ENCODE measurements at regions of chr20 and their contacts with region 1.

Region 1: DNA sequence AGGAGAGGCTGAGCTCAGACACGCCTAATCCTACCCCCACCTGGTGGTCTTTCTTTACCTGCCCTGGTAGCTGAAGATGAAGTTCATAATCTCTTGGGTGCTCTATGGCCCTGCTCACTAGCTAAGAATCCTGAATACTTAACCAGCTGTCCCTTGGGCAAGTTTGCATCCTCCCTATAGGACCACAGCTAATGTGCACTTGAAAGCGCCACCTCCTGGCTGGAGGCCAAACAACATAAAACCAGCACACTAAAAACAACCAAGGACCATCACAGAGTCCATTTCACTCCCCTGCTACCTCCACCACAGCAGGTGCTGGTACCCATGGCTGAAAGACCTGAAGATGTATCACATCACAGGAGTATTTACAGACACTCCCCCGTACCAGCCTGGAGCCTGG is 155.5 kb upstream of the SLC24A3 start:
- DNase-seq: peak in 2 of 14 experiments; percentile 7 to 12
- ATAC-seq: no peak
- H3K4me3 ChIP-seq: no peak overlapping the region
- H3K4me3 Mint-ChIP-seq: no peak overlapping the region
- H3K27ac ChIP-seq: no peak overlapping the region
- H3K27ac Mint-ChIP-seq: no peak overlapping the region
- H3K4me1 ChIP-seq: no peaks in the 10 kb centered on the region
- H3K4me1 Mint-ChIP-seq: no peaks in the 10 kb centered on the region
- H3K27me3 ChIP-seq: peaks cover 0 to 3% of the 10 kb centered on the region in 2 experiments
- H3K27me3 Mint-ChIP-seq: peaks cover 10% of the 10 kb centered on the region
- CTCF ChIP-seq: no peak

Region 2: DNA sequence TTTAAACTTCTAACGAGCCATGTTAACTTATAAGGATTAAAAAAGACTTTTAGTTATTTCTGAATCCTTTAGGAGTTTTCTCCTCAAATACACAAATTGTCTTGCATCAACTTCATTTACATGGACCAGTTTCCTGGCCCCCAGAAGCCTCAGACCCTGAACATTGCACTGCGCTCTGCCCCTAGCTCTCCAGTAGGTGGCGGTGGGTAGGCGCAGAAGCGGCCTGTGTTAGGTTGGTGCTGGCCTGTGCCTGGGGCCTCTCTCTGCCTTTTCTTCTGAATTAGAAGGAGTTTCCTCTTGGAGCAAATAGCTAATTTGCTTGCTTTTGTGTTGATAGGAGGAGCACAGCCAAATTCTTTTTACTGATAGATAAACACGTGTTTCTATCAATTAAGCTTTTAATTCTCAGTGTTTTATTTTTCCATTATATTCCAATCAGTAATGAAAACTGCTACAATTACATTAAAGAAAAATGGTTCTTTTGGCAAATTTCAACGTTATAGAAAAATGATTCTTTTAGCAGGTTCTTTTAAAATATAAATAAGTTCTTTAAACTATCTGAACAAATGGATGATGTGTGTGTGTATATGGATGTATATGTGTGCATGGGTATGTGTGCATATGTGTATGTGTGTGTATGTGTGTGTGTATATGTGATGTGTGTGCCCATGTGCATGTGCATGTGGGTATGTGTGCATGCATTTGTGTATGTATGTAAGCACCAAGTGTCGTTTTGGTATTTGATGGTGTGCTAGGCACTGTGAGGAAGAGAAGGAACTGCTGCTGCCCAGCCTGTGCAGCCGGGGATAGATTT is 424.5 kb before region 1 on chr20:
- CTCF ChIA-PET with region 1: no interaction called
- POLR2A ChIA-PET with region 1: no interaction called
- intact Hi-C with region 1: loop called in 1 of 2 experiments (anchors 10 kb)
- DNase-seq: peak; percentile 6 to 57 (median 36)
- ATAC-seq: peak; percentile 62
- H3K4me3 ChIP-seq: no peak overlapping the region
- H3K4me3 Mint-ChIP-seq: no peak overlapping the region
- H3K27ac ChIP-seq: no peak overlapping the region
- H3K27ac Mint-ChIP-seq: no peak overlapping the region
- H3K4me1 ChIP-seq: no peaks in the 10 kb centered on the region
- H3K4me1 Mint-ChIP-seq: no peaks in the 10 kb centered on the region
- H3K27me3 ChIP-seq: no peaks in the 10 kb centered on the region
- H3K27me3 Mint-ChIP-seq: no peaks in the 10 kb centered on the region
- CTCF ChIP-seq: peak; percentile 74

Region 3: DNA sequence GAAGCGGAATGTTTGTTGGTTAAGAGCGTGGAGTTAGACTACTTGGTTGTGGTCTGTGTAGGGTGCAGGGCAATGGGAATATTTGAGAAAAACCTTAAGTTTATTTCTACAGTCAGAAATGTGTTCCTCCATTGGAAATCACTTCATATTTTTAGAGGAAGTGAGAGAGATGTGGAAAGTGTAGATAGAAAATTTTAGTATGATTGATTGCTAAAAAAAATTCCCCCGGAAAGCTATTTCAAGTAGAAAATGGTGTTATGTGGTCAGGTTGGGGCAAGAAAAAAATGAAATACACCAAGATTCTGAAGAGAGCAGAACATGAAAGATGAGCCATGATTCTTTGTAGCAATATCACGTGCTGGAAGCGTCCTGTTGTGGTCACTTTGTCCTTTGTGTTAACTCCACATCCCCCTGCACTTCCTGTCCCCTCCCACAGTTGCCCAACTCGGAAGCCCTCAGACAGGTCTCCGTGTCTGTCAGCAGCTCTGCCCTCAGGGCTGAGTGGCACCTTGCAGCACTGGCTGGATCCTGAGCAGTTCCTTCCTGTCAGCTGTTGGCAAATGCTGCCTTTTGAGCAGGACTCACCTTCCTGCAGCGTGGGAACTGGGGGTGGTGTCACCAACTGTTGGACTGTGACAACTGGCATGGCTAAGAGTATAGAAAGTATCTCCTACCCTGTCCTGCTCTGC is 18.1 kb after region 1 on chr20:
- CTCF ChIA-PET with region 1: no interaction called
- POLR2A ChIA-PET with region 1: no interaction called
- intact Hi-C with region 1: no loop called
- DNase-seq: peak in 4 of 14 experiments; percentile 2 to 36 (median 20)
- ATAC-seq: no peak
- H3K4me3 ChIP-seq: no peak overlapping the region
- H3K4me3 Mint-ChIP-seq: no peak overlapping the region
- H3K27ac ChIP-seq: no peak overlapping the region
- H3K27ac Mint-ChIP-seq: no peak overlapping the region
- H3K4me1 ChIP-seq: no peaks in the 10 kb centered on the region
- H3K4me1 Mint-ChIP-seq: no peaks in the 10 kb centered on the region
- H3K27me3 ChIP-seq: no peaks in the 10 kb centered on the region
- H3K27me3 Mint-ChIP-seq: no peaks in the 10 kb centered on the region
- CTCF ChIP-seq: no peak

Measured in CD4-positive, alpha-beta T cell (primary cell).